ENCODE measurements at regions of chr6 and their contacts with region 1.

Region 1: GRCh38 chr6:90610751-90611542 is 24.1 kb upstream of the MAP3K7 start:
- DNase-seq: peak; percentile 14
- H3K4me3 Mint-ChIP-seq: peak overlapping the region; percentile 84
- H3K27ac Mint-ChIP-seq: peak overlapping the region; percentile 47
- H3K4me1 Mint-ChIP-seq: peaks cover 13% of the 10 kb centered on the region
- H3K27me3 Mint-ChIP-seq: peaks cover 64% of the 10 kb centered on the region

Region 2: GRCh38 chr6:90599151-90599550 is 11.8 kb before region 1 on chr6:
- intact Hi-C with region 1: loop called (anchors 1 kb)
- DNase-seq: no peak
- H3K4me3 Mint-ChIP-seq: no peak overlapping the region
- H3K27ac Mint-ChIP-seq: no peak overlapping the region
- H3K4me1 Mint-ChIP-seq: no peaks in the 10 kb centered on the region
- H3K27me3 Mint-ChIP-seq: peaks cover 37% of the 10 kb centered on the region

Region 3: GRCh38 chr6:90621581-90621980 is 10.6 kb after region 1 on chr6:
- intact Hi-C with region 1: no loop called
- DNase-seq: no peak
- H3K4me3 Mint-ChIP-seq: no peak overlapping the region
- H3K27ac Mint-ChIP-seq: no peak overlapping the region
- H3K4me1 Mint-ChIP-seq: no peaks in the 10 kb centered on the region
- H3K27me3 Mint-ChIP-seq: peaks cover 31% of the 10 kb centered on the region

Region 4: DNA sequence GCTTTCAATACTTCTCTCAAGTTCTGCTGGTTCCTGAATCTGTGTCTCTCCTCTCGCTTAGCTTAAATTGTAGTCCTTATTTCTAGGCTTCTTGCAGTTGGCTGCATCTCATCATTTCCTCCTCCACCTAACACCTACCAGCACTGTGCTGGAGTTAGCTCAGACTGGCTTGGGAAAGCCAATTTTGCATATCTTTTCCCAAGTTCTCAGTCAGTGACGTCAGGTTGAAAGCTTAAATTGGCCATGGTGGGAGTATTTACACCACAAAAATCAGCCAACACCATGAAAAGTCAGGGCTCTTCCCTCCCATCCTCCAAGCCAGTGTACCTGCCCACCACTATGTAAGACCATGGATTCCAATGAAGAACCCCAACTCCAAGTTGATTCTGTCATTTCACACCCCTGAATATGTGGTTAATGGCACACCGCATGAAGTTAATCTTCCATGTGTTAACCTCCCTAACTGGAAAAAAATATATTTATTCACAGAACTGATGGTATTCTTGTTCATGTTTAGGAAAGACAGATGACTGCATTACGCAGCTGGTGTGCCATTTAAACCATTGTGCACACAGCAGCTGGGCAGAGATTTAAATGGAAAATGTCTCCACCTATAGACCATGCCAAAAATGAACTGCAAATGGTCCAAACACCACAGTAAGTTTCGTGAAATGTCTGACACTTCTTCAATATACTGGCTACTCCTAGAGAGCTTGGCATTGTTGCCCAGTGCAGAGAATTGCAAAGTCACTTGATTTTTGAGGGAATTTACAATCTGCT is 250.1 kb after region 1 on chr6:
- intact Hi-C with region 1: loop called (anchors 5 kb)
- DNase-seq: no peak
- H3K4me3 Mint-ChIP-seq: no peak overlapping the region
- H3K27ac Mint-ChIP-seq: no peak overlapping the region
- H3K4me1 Mint-ChIP-seq: peaks cover 6% of the 10 kb centered on the region
- H3K27me3 Mint-ChIP-seq: peaks cover 3% of the 10 kb centered on the region